Caco-2 (cell line): ENCODE measurements at regions of chr4 and their contacts with region 1.

Region 1: GRCh38 chr4:128863312-128864075 is 54.0 kb downstream of the JADE1 start:
- DNase-seq: peak; percentile 73 to 77
- H3K4me3 ChIP-seq: no peak overlapping the region
- H3K4me3 Mint-ChIP-seq: no peak overlapping the region
- H3K27ac Mint-ChIP-seq: peak overlapping the region; percentile 40
- H3K4me1 ChIP-seq: no peaks in the 10 kb centered on the region; the same call in 1 of the 2 replicates
- H3K4me1 Mint-ChIP-seq: peaks cover 23% of the 10 kb centered on the region
- H3K27me3 ChIP-seq: no peaks in the 10 kb centered on the region
- H3K27me3 Mint-ChIP-seq: no peaks in the 10 kb centered on the region
- CTCF ChIP-seq: peak; percentile 77 to 84

Region 2: GRCh38 chr4:128565565-128566186 is 297.8 kb before region 1 on chr4:
- CTCF ChIA-PET with region 1: no interaction called
- POLR2A ChIA-PET with region 1: no interaction called
- intact Hi-C with region 1: loop called (anchors 2 kb)
- DNase-seq: peak; percentile 62 to 70
- H3K4me3 ChIP-seq: no peak overlapping the region
- H3K4me3 Mint-ChIP-seq: no peak overlapping the region
- H3K27ac Mint-ChIP-seq: no peak overlapping the region
- H3K4me1 ChIP-seq: peaks cover 28% of the 10 kb centered on the region
- H3K4me1 Mint-ChIP-seq: peaks cover 43% of the 10 kb centered on the region
- H3K27me3 ChIP-seq: no peaks in the 10 kb centered on the region
- H3K27me3 Mint-ChIP-seq: no peaks in the 10 kb centered on the region
- CTCF ChIP-seq: peak; percentile 40 to 69